H1 (cell line): ENCODE measurements at regions of chr11 and their contacts with region 1.

Region 1: GRCh38 chr11:62081378-62082291 is 42.2 kb upstream of the INCENP start:
- DNase-seq: peak; percentile 25 to 95
- H3K4me3 ChIP-seq: no peak overlapping the region
- H3K27ac ChIP-seq: no peak overlapping the region
- H3K4me1 ChIP-seq: no peaks in the 10 kb centered on the region
- H3K27me3 ChIP-seq: no peaks in the 10 kb centered on the region
- CTCF ChIP-seq: peak; percentile 84 to 94 (median 89)
- EP300 ChIP-seq: no peak
- POLR2A ChIP-seq: no peak
- RAD21 ChIP-seq: peak; percentile 98 to 99

Region 2: DNA sequence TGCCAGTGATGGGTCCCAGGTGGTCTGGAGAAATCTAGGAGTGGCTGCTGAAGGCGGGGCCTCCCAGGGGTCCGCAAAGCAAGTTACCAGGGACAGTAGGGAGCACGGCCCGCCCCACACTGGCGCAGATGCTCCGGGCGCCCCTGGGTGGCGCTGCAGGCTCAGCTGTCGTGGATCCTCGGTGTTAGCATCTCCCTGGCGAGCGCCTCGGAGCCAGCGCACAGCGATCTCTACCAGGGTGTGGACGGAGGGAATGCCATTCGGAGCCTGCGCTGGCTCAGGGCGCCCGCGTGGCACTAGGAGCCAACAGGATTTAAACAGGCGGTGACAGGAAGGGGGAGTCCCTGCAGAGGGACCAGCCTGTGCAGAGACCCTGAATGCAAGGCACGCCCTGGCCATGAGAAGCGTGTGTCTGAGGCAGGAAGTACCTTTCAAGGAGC is 210.5 kb before region 1 on chr11:
- CTCF ChIA-PET with region 1: interaction called, 34 read pairs
- POLR2A ChIA-PET with region 1: no interaction called
- DNase-seq: peak; percentile 73 to 94
- H3K4me3 ChIP-seq: peak overlapping the region in 2 of 4 experiments; percentile 22 to 30; a peak in 5 of 8 replicates
- H3K27ac ChIP-seq: no peak overlapping the region
- H3K4me1 ChIP-seq: peaks cover 4 to 14% (median 4%) of the 10 kb centered on the region in 4 experiments; a peak in 6 of 7 replicates
- H3K27me3 ChIP-seq: peaks cover 0 to 11% (median 8%) of the 10 kb centered on the region in 4 experiments; a peak in 5 of 7 replicates
- CTCF ChIP-seq: peak in 2 of 3 experiments; percentile 94 to 97; a peak in 3 of 4 replicates
- EP300 ChIP-seq: 0 out of 3 replicates have a peak, but pooled peaks of 1 of the 2 experiments have one; percentile 27
- POLR2A ChIP-seq: no peak
- RAD21 ChIP-seq: peak; percentile 97 to 98

Region 3: DNA sequence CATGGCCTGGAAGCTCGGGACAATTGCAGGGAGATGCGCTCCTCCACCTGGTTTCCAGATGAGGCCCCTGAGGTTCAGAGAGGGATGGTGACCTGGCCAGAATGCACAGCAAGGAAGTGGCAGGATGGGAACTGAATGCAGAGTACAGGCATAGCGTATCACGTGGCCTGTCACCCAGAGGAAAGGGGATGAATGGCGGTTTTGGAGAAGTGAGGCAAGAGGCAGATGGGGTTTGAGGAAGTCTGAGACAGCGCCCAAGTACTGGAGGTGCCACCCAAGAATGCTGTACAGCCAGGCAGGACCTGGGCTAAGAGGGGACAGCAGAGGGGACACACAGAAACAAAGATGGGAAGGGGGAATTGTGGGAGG is 169.1 kb before region 1 on chr11:
- CTCF ChIA-PET with region 1: interaction called, 12 read pairs
- POLR2A ChIA-PET with region 1: interaction called, 3 read pairs
- DNase-seq: no peak
- H3K4me3 ChIP-seq: no peak overlapping the region
- H3K27ac ChIP-seq: no peak overlapping the region
- H3K4me1 ChIP-seq: peaks cover 0 to 21% (median 10%) of the 10 kb centered on the region in 4 experiments; a peak in 6 of 7 replicates
- H3K27me3 ChIP-seq: peaks cover 0 to 9% (median 6%) of the 10 kb centered on the region in 4 experiments; a peak in 4 of 7 replicates
- CTCF ChIP-seq: no peak
- EP300 ChIP-seq: no peak
- POLR2A ChIP-seq: no peak
- RAD21 ChIP-seq: no peak

Region 4: GRCh38 chr11:61954851-61955421 is 126.7 kb before region 1 on chr11:
- CTCF ChIA-PET with region 1: interaction called, 170 read pairs
- POLR2A ChIA-PET with region 1: no interaction called
- DNase-seq: peak in 1 of 2 experiments; percentile 53
- H3K4me3 ChIP-seq: peak overlapping the region; percentile 18 to 54 (median 28); a peak in 6 of 8 replicates
- H3K27ac ChIP-seq: no peak overlapping the region
- H3K4me1 ChIP-seq: peaks cover 0 to 4% (median 3%) of the 10 kb centered on the region in 4 experiments; a peak in 5 of 7 replicates
- H3K27me3 ChIP-seq: peaks cover 0 to 8% (median 2%) of the 10 kb centered on the region in 4 experiments; a peak in 4 of 7 replicates
- CTCF ChIP-seq: peak in 2 of 3 experiments; percentile 23 to 31; a peak in 3 of 4 replicates
- EP300 ChIP-seq: no peak
- POLR2A ChIP-seq: no peak; a peak in 1 of 3 replicates
- RAD21 ChIP-seq: peak in 1 of 2 experiments; percentile 35; a peak in 1 of 4 replicates

Region 5: DNA sequence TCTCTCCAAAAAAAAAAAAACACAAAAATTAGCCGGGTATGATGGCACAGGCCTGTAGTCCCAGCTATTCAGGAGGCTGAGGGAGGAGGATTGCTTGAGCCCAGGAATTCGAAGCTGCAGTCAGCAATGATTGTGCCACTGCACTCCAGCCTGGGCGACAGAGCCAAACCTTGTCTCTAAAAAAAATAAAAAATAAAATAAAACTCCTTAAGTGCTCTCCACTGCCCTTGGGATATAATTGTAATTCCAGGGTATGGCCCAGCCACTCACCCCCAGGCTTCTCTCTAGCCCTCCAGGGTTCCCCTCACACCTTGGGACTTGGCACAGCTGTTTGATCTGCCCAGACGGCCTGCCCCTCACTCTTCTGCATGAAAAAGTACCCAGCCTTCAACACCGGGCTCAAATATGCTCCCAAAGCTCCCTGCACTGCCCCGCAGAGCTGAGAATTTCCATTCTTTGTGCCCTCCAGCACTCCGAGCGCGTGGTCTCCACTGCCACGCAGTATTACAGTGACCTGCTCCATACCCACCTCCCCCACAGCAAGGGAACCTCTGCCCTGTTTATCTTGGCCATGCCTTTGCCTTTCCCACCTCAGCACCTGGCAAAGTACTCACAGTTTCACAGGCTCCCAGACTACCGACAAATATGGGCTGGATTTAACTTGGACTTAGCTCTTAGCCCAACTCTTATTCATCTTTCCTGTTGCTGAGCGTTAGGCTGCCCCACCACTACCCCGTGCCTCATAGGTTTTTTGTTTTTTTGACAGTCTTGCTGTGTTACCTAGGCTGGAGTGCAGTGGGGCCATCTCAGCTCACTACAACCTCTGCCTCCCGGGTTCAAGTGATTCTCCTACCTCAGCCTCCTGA is 106.6 kb before region 1 on chr11:
- CTCF ChIA-PET with region 1: interaction called, 27 read pairs
- POLR2A ChIA-PET with region 1: interaction called, 3 read pairs
- DNase-seq: no peak
- H3K4me3 ChIP-seq: no peak overlapping the region
- H3K27ac ChIP-seq: no peak overlapping the region
- H3K4me1 ChIP-seq: peaks cover 9 to 20% (median 15%) of the 10 kb centered on the region in 4 experiments
- H3K27me3 ChIP-seq: peaks cover 0 to 11% (median 1%) of the 10 kb centered on the region in 4 experiments; a peak in 3 of 7 replicates
- CTCF ChIP-seq: no peak
- EP300 ChIP-seq: no peak
- POLR2A ChIP-seq: no peak
- RAD21 ChIP-seq: no peak

Region 6: DNA sequence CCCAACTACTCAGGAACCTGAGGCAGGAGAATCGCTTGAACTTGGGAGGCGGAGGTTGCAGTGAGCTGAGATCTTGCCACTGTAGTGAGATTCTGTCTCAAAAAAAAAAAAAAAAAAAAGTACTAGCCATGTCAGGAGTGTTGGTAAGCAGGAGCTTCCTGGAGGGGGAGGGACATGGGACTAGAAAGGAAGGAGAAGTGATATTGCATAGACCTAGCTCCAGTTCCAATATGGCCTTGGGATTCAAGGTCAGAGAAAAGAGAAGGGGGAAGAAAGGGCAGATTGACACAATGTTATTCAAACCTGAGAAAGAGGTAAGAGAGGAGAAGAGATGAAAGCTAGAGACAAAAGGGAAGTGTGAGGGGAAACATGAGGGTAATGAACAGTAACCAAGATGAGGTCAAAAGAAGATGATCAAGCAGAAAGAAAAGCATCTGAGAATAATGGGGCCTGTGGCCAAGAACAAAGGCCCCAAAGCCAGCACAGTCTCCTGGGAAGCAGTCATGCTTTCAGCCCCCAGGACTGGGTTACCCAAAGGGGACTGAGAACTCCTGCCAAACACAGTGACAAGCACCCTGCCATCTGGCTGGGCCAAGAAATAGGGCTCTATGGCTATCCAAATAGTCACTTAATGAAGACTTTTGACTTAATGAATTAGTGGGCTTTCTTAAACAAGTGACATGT is 62.5 kb before region 1 on chr11:
- CTCF ChIA-PET with region 1: interaction called, 14 read pairs
- POLR2A ChIA-PET with region 1: no interaction called
- DNase-seq: no peak
- H3K4me3 ChIP-seq: no peak overlapping the region
- H3K27ac ChIP-seq: no peak overlapping the region
- H3K4me1 ChIP-seq: no peaks in the 10 kb centered on the region
- H3K27me3 ChIP-seq: no peaks in the 10 kb centered on the region
- CTCF ChIP-seq: no peak
- EP300 ChIP-seq: no peak
- POLR2A ChIP-seq: no peak
- RAD21 ChIP-seq: no peak

Region 7: DNA sequence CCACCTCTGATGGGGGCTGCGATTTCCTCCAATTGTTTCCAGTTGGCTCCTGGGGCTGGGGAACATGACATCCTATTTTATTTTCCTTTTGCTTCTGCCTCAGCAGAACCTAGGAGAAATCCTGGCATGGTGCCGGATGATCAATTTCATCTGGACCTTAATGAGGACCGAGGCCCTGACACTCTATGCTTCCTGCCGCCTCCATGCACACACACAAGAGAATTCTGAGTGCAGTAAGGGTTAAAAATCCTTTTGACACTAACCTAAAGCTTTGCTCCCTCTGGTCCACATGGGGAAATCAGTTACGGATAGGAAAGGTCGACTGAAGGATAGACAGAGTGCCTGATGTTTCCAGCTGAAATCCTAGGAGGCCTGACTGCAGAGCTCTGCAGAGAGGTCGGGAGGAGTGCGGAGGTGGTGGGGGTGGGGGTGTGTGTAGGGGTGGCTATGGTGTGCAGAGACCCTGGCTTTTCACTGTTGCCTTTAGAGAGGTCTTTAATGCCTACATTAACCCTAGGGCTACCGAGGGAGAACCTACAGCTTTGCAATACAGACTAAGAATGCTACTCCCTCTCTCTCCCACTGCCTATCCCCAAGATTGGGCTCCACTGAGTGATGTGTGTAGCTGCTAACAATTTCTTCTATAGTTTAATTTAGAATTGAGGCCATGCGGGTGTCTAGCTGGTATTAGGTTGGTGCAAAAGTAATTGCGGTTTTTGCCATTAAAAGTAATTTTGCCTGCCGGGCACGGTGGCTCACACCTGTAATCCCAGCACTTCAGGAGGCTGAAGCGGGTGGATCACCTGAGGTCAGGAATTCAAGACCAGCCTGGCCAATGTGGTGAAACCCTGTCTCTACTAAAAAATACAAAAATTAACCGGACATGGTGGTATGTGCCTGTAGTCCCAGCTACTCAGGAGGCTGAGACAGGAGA is 11.4 kb before region 1 on chr11:
- CTCF ChIA-PET with region 1: interaction called, 84 read pairs
- POLR2A ChIA-PET with region 1: no interaction called
- DNase-seq: no peak
- H3K4me3 ChIP-seq: no peak overlapping the region
- H3K27ac ChIP-seq: no peak overlapping the region
- H3K4me1 ChIP-seq: no peaks in the 10 kb centered on the region
- H3K27me3 ChIP-seq: no peaks in the 10 kb centered on the region
- CTCF ChIP-seq: no peak
- EP300 ChIP-seq: no peak
- POLR2A ChIP-seq: no peak
- RAD21 ChIP-seq: no peak

Region 8: DNA sequence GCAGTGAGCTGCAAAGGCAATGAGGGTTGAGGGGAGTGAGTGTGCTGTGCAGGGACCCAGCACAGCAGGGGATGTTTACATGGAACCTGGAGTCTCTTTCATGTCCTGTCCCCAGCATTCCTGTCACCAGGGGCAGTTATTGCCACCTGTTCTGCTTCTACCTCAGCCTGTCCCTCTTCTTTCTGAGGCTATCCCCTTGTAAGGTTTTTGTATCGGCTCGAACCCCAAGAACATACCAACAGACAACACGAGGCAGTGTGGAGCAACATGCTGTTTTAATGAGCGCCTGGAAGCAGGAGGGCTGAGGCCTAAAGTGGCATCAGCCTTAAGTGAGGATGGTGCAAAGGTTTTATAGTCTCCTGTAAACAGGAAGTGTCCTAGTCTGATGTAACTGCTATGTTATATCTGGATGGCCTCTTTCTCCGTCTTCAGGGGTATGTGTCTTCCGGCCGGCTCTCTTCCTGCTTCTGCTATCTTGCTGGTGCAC is 192.2 kb after region 1 on chr11:
- CTCF ChIA-PET with region 1: no interaction called
- POLR2A ChIA-PET with region 1: no interaction called
- DNase-seq: no peak
- H3K4me3 ChIP-seq: no peak overlapping the region
- H3K27ac ChIP-seq: no peak overlapping the region
- H3K4me1 ChIP-seq: no peaks in the 10 kb centered on the region
- H3K27me3 ChIP-seq: no peaks in the 10 kb centered on the region
- CTCF ChIP-seq: peak in 2 of 3 experiments; percentile 1 to 23; a peak in 1 of 4 replicates
- EP300 ChIP-seq: no peak
- POLR2A ChIP-seq: no peak
- RAD21 ChIP-seq: no peak